ENCODE measurements at regions of chr12 and their contacts with region 1.

Region 1: GRCh38 chr12:34033628-34034282 is 11.5 kb downstream of the ALG10 start:
- DNase-seq: peak in 1 of 2 experiments; percentile 29
- H3K4me3 ChIP-seq: no peak overlapping the region
- H3K4me3 Mint-ChIP-seq: no peak overlapping the region
- H3K27ac Mint-ChIP-seq: no peak overlapping the region
- H3K4me1 ChIP-seq: no peaks in the 10 kb centered on the region
- H3K4me1 Mint-ChIP-seq: no peaks in the 10 kb centered on the region
- H3K27me3 ChIP-seq: no peaks in the 10 kb centered on the region
- H3K27me3 Mint-ChIP-seq: no peaks in the 10 kb centered on the region
- CTCF ChIP-seq: peak; percentile 36 to 65

Region 2: GRCh38 chr12:33439282-33440011 is 594.3 kb before region 1 on chr12 and contains the start of gene SYT10:
- CTCF ChIA-PET with region 1: no interaction called
- POLR2A ChIA-PET with region 1: no interaction called
- intact Hi-C with region 1: no loop called
- DNase-seq: peak in 1 of 2 experiments; percentile 36
- H3K4me3 ChIP-seq: peak within 1 kb of the TSS; percentile 47
- H3K4me3 Mint-ChIP-seq: peak within 1 kb of the TSS; percentile 74
- H3K27ac Mint-ChIP-seq: no peak within 1 kb of the TSS
- H3K4me1 ChIP-seq: no peaks in the 10 kb centered on the region
- H3K4me1 Mint-ChIP-seq: no peaks in the 10 kb centered on the region
- H3K27me3 ChIP-seq: peaks cover 3% of the 10 kb centered on the region; the same call in 1 of the 2 replicates
- H3K27me3 Mint-ChIP-seq: peaks cover 36% of the 10 kb centered on the region
- CTCF ChIP-seq: no peak
- total RNA-seq, gene SYT10: not detected in 2 replicates

Region 3: GRCh38 chr12:34625116-34625515 is 591.4 kb after region 1 on chr12:
- CTCF ChIA-PET with region 1: no interaction called
- POLR2A ChIA-PET with region 1: no interaction called
- intact Hi-C with region 1: loop called (anchors 1 kb)
- DNase-seq: peak in 1 of 2 experiments; percentile 40
- H3K4me3 ChIP-seq: no peak overlapping the region
- H3K4me3 Mint-ChIP-seq: no peak overlapping the region
- H3K27ac Mint-ChIP-seq: no peak overlapping the region
- H3K4me1 ChIP-seq: no peaks in the 10 kb centered on the region
- H3K4me1 Mint-ChIP-seq: no peaks in the 10 kb centered on the region
- H3K27me3 ChIP-seq: no peaks in the 10 kb centered on the region
- H3K27me3 Mint-ChIP-seq: no peaks in the 10 kb centered on the region
- CTCF ChIP-seq: peak; percentile 4 to 57